ENCODE measurements at regions of chr16 and their contacts with region 1.

Region 1: GRCh38 chr16:51807551-51807950 is 656.5 kb upstream of the SALL1 start:
- DNase-seq: peak; percentile 57
- H3K4me3 ChIP-seq: no peak overlapping the region
- H3K27ac ChIP-seq: no peak overlapping the region
- H3K4me1 ChIP-seq: no peaks in the 10 kb centered on the region
- H3K27me3 ChIP-seq: no peaks in the 10 kb centered on the region
- CTCF ChIP-seq: no peak

Region 2: GRCh38 chr16:53297477-53297876 is 1489.9 kb after region 1 on chr16:
- CTCF ChIA-PET with region 1: no interaction called
- POLR2A ChIA-PET with region 1: interaction called, 14 read pairs
- intact Hi-C with region 1: no loop called
- DNase-seq: no peak
- H3K4me3 ChIP-seq: no peak overlapping the region
- H3K27ac ChIP-seq: no peak overlapping the region
- H3K4me1 ChIP-seq: no peaks in the 10 kb centered on the region
- H3K27me3 ChIP-seq: no peaks in the 10 kb centered on the region
- CTCF ChIP-seq: no peak